ENCODE measurements at regions of chr5 and their contacts with region 1.

Region 1: DNA sequence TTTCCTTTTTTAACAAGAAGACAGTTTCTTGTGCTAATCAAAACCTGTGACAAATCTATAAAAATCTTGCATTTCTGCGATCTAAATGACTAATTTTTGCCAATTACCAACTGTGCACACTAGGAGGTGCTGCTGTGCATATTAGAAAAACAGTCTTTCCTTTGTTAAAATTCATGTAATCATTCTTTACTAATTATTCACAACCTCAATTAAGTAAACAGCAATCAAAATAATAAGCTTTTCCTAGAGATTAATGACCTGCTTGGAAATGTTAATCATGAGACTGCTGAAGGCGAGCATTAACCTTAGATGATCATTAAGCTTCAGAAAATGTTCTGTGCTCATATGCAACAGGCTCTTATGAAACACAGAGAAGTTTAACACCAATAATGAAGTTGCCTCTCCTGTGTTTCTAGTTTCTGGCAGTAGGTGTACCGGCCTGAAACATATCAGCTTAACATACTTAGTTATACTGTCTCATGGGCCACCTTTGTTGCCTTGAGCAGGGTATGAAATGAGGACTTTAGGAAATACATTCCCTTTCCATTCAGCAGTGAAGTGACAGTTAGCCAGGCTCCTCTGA is 17.7 kb downstream of the RFESD start:
- DNase-seq: no peak
- H3K4me3 ChIP-seq: no peak overlapping the region
- H3K27ac ChIP-seq: no peak overlapping the region
- H3K27me3 ChIP-seq: no peaks in the 10 kb centered on the region
- CTCF ChIP-seq: peak; percentile 80

Region 2: GRCh38 chr5:95697781-95698681 is 33.7 kb after region 1 on chr5:
- CTCF ChIA-PET with region 1: interaction called, 14 read pairs
- POLR2A ChIA-PET with region 1: no interaction called
- DNase-seq: no peak
- H3K4me3 ChIP-seq: no peak overlapping the region
- H3K27ac ChIP-seq: no peak overlapping the region
- H3K27me3 ChIP-seq: no peaks in the 10 kb centered on the region
- CTCF ChIP-seq: no peak

Region 3: GRCh38 chr5:95730730-95731570 is 66.7 kb after region 1 on chr5 and contains the start of gene RHOBTB3:
- CTCF ChIA-PET with region 1: interaction called, 31 read pairs
- POLR2A ChIA-PET with region 1: interaction called, 20 read pairs
- DNase-seq: peak; percentile 80
- H3K4me3 ChIP-seq: peak within 1 kb of the TSS; percentile 91
- H3K27ac ChIP-seq: peak within 1 kb of the TSS; percentile 88
- H3K27me3 ChIP-seq: no peaks in the 10 kb centered on the region
- CTCF ChIP-seq: no peak
- polyA plus RNA-seq, gene RHOBTB3: 303 and 360 TPM in 2 replicates

Region 4: DNA sequence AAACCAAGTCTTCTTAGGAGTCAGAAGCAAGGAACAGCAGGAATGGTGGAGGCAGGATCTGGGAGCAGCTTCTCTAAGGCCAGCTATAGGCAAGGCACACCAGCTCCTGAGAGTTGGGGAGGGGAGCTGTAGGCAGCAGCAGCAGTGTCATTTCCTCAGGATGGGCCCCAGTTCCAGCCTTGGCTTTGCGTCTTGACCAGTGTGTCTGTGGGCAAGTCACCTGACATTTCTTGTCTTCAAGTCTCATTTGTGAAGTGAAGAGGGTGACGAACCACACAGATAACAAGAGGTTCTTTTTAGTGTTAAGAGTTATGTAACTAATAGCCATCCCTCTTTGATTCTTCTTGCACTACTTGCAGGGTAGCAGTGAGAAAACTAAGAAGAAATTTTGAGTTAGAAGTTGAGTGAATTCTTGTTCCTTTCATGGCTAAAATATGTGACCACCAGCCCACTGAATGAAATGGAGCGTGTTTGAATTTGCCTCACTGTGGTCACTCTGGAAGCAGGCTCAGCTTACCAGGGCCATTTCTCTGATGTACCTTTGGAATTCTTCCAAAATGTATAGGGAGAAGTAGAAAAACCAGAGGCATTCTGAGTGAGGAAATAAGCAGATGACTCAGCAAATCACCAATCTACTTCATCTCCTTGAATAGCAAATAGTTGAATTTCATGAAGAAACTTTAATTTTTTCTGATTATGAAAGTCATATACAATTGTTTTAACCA is 109.2 kb after region 1 on chr5:
- CTCF ChIA-PET with region 1: interaction called, 10 read pairs
- POLR2A ChIA-PET with region 1: no interaction called
- DNase-seq: no peak
- H3K4me3 ChIP-seq: no peak overlapping the region
- H3K27ac ChIP-seq: peak overlapping the region; percentile 71
- H3K27me3 ChIP-seq: no peaks in the 10 kb centered on the region
- CTCF ChIP-seq: no peak

Region 5: DNA sequence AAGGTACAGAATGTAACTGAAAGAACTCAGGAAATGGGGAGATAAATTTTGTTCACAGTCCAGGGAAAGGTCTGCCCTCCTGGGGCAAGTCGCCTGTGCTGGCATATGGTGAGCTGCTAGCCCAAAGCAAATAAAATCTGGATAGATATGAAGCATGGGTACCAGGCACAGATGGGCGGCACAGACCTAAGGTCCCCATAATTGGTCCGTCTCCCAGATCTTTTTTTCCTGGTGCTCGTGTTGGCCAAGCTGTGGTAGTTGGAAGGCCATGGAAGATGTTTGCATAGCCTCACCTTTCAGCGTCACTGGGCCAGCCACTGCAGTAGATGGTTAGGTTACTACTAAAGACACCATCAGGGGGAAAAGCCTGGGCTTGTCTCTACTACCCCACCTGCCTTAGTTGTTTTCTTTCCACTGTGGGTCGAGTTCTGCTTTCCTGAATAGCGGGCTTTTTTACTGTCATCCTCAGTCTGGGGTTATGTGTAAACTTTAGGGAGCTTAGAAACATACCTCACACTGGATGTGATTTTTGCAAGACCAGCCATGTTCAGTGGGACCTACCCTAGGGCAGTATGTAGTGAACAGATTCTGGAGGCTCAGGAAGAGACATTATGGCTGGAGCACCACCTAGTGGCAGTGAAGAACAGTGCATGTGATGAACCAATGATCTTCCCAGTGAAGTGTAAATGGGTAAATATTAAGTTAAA is 182.4 kb after region 1 on chr5:
- CTCF ChIA-PET with region 1: interaction called, 49 read pairs
- POLR2A ChIA-PET with region 1: no interaction called
- DNase-seq: peak; percentile 59
- H3K4me3 ChIP-seq: no peak overlapping the region
- H3K27ac ChIP-seq: no peak overlapping the region
- H3K27me3 ChIP-seq: no peaks in the 10 kb centered on the region
- CTCF ChIP-seq: peak; percentile 95